Gastrocnemius medialis (tissue), 4 donors: ENCODE measurements at regions of chr1 and their contacts with region 1.

Region 1: DNA sequence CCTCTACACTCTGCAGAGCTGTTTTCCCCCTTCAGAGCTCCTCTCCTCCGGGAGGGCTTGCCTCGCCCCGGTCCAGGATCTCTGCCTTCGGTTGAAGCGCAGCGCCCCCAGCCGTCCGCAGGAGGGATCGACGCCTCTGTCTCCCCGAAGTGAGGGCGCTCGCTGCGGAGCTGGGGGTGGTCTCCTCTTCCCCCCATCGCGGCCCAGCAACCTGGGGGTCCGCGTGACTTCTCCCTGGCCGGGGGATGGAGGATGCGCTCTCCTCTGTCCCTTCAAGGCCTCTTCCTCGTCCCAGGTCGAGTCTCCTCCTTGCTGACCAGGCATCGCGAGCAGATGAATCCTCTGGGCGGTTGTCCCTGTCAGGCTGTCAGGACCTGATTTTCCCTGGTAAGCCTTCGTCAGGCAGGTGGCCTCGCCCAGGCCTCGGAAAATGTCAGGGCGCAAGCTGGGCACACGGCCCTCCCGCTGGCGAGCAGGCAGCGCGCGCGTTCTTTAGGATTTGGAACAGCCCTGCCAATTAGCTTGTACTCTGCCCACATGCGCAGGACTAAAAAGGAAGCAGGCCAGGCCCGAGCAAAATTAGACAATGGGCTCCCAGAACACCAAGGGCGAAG is 90.5 kb downstream of the EDEM3 start:
- DNase-seq: peak; percentile 69 to 76
- ATAC-seq: peak; percentile 77 to 86
- H3K4me3 ChIP-seq: peak overlapping the region; percentile 42 to 59 (median 54)
- H3K27ac ChIP-seq: peak overlapping the region; percentile 65 to 85 (median 81)
- H3K4me1 ChIP-seq: peaks cover 20 to 27% of the 10 kb centered on the region in 2 donors
- H3K27me3 ChIP-seq: no peaks in the 10 kb centered on the region
- CTCF ChIP-seq: peak; percentile 96 to 97 (median 96)
- POLR2A ChIP-seq: no peak

Region 2: GRCh38 chr1:184315254-184315653 is 348.9 kb before region 1 on chr1:
- in situ Hi-C with region 1: loop called in 1 of 4 experiments (anchors 10 kb)
- intact Hi-C with region 1: no loop called
- DNase-seq: no peak
- ATAC-seq: peak in 1 of 2 donors; percentile 43
- H3K4me3 ChIP-seq: no peak overlapping the region
- H3K27ac ChIP-seq: no peak overlapping the region
- H3K4me1 ChIP-seq: no peaks in the 10 kb centered on the region
- H3K27me3 ChIP-seq: no peaks in the 10 kb centered on the region
- CTCF ChIP-seq: no peak
- POLR2A ChIP-seq: no peak

Region 3: DNA sequence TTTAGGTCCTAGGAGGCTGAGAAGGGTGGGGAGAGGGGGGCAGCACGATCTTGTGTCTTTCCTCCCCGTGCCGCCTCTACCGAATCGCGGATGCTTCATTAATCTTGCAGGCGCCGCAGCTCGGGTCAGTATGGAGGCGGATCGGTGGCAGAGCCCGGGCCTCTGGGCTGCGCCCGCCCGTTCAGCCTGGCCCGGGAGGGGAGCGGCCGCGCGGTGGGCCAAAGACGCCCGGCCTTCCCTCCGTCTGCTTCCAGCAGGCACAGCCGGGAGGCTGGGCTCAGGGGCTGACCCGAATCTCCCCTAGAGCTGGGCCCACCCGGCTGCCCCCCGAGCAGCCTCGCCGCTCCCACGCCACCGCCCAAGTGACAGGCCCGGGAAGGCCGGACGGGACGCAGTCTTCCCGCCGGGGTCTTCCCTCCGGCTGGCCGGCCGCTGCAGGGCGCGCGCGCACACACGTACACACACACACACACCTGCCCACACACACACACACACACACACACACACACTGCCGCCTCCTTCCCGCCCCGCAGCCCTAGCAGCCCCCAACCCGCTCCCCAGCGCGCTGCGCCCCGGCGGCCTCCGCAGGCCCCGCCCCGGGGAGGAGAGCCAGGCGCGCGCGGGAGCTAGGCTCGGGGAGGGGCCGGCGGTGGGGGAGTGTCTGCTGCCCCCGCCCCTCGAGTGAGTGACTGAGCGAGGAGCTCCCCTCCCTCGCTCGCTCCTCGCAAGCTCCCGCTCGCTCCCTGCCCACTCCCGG is 277.7 kb before region 1 on chr1 and contains the start of gene C1orf21:
- in situ Hi-C with region 1: loop called in 3 of 4 experiments (anchors 5 to 25 kb)
- intact Hi-C with region 1: loop called (anchors 2 kb)
- DNase-seq: peak; percentile 92
- ATAC-seq: peak; percentile 64 to 65
- H3K4me3 ChIP-seq: peak within 1 kb of the TSS; percentile 77 to 96 (median 92)
- H3K27ac ChIP-seq: peak within 1 kb of the TSS; percentile 97 to 100 (median 98)
- H3K4me1 ChIP-seq: peaks cover 23 to 31% of the 10 kb centered on the region in 2 donors
- H3K27me3 ChIP-seq: no peaks in the 10 kb centered on the region
- CTCF ChIP-seq: no peak
- POLR2A ChIP-seq: peak; percentile 97 to 99
- total RNA-seq, gene C1orf21: 106 to 206 (median 154) TPM

Region 4: DNA sequence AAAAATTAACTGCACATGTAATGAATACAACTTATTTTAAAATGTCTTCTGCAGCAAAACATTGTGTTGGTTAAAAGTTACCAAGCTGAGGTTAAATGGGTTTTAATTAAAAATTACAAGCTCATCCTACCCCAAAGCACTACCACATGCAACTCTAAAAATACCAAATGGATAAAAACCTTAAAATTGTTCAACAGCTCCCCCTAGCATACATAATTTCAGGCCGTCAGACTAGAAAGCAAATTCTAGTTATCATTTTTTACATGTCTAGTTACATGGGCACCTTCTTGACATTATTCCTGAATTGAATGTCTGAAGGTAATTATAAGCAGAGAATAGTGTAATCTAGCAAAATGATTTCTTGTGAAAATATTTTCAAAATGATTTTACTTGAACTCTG is 100.8 kb before region 1 on chr1:
- in situ Hi-C with region 1: loop called in 1 of 4 experiments (anchors 10 kb)
- intact Hi-C with region 1: loop called (anchors 5 kb)
- DNase-seq: no peak
- ATAC-seq: no peak
- H3K4me3 ChIP-seq: no peak overlapping the region
- H3K27ac ChIP-seq: peak overlapping the region; percentile 91 to 97 (median 95)
- H3K4me1 ChIP-seq: peaks cover 33 to 42% of the 10 kb centered on the region in 2 donors
- H3K27me3 ChIP-seq: no peaks in the 10 kb centered on the region
- CTCF ChIP-seq: peak; percentile 31 to 62 (median 45)
- POLR2A ChIP-seq: no peak

Region 5: GRCh38 chr1:184622136-184622823 is 41.9 kb before region 1 on chr1:
- in situ Hi-C with region 1: no loop called
- intact Hi-C with region 1: loop called (anchors 2 kb)
- DNase-seq: peak; percentile 90 to 92
- ATAC-seq: peak; percentile 79 to 83
- H3K4me3 ChIP-seq: no peak overlapping the region
- H3K27ac ChIP-seq: peak overlapping the region; percentile 87 to 97 (median 88)
- H3K4me1 ChIP-seq: peaks cover 74 to 84% of the 10 kb centered on the region in 2 donors
- H3K27me3 ChIP-seq: no peaks in the 10 kb centered on the region
- CTCF ChIP-seq: no peak
- POLR2A ChIP-seq: peak; percentile 22 to 61

Region 6: GRCh38 chr1:184649451-184649888 is 14.7 kb before region 1 on chr1:
- in situ Hi-C with region 1: no loop called
- intact Hi-C with region 1: no loop called
- DNase-seq: no peak
- ATAC-seq: peak; percentile 90 to 93
- H3K4me3 ChIP-seq: peak overlapping the region in 2 of 4 donors; percentile 16 to 23
- H3K27ac ChIP-seq: peak overlapping the region; percentile 72 to 83 (median 74)
- H3K4me1 ChIP-seq: peaks cover 21% of the 10 kb centered on the region in 2 donors
- H3K27me3 ChIP-seq: no peaks in the 10 kb centered on the region
- CTCF ChIP-seq: no peak
- POLR2A ChIP-seq: no peak

Region 7: DNA sequence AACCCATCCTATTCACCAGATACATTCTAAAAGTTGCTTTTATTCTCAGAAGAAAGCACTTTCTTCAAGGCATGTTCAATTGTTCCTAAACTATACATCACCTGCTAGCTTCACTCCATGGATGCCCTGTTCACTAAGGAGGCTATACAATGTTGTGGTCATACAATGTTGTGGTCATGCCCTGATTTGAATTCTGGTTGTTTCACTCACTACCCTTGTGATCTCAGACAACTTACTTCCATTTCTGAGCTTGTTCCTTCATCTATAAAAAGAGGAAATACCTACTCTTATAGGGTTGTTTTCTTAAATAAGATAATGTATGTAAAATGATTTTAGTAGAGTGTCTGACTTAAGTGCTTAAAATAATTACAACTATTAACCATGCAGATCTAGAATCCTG is 70.8 kb after region 1 on chr1:
- in situ Hi-C with region 1: no loop called
- intact Hi-C with region 1: no loop called
- DNase-seq: no peak
- ATAC-seq: no peak
- H3K4me3 ChIP-seq: no peak overlapping the region
- H3K27ac ChIP-seq: no peak overlapping the region
- H3K4me1 ChIP-seq: no peaks in the 10 kb centered on the region
- H3K27me3 ChIP-seq: no peaks in the 10 kb centered on the region
- CTCF ChIP-seq: no peak
- POLR2A ChIP-seq: no peak